ENCODE measurements at regions of chr13 and their contacts with region 1.

Region 1: DNA sequence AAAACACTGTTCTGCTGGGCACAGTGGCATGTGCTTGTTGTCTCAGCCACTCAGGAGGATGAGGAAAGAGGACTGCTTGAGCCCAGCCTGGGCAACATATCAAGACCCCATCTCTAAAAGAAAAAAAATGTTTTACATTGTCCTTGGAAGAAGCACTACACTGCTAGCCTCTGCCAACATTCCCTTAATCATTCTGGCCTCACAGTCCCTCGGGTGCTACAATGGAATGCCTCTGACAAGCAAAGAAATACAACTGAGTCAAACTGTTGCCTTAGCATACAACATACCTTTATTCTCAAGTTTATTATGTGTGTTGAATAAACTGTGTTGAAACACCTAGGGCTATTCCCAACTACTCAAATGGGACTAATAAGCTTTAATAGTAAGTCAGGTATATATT is 56.1 kb downstream of the PSPC1 start:
- DNase-seq: no peak
- H3K4me3 ChIP-seq: no peak overlapping the region
- CTCF ChIP-seq: no peak

Region 2: GRCh38 chr13:19681517-19681916 is 45.1 kb before region 1 on chr13:
- in situ Hi-C with region 1: no loop called
- DNase-seq: no peak
- H3K4me3 ChIP-seq: no peak overlapping the region
- CTCF ChIP-seq: no peak

Region 3: DNA sequence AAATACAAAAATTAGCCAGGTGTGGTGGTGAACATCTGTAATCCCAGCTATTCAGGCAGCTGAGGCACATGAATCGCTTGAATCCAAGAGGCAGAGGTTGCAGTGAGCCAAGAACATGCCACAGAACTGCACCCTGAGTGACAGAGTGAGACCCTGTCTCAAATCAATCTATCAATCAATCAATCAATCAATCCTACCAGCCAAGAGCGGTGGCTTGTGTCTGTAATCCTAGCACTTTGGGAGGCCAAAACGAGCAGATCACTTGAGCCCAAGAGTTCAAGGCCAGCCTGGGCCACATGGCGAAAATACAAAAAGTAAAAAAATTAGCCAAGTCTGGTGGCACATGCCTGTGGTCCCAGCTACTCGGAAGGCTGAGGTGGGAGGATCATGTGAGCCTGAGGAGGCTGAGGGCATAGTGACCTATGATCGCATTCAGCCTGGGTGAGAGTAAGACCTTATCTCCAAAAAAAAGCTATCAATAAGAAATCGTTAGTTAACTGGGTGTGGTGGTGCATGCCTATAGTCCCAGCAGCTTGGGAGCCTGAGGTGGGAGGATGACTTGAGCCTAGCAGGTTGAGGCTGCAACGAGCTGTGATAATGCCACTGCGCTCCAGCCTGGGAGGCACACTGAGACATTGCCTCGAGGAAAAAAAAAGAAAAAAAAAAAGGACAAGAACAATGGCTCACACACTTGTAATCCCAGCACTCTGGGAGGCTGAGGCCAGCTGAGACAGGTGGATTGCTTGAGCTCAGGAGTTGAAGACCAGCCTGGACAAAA is 39.8 kb after region 1 on chr13:
- in situ Hi-C with region 1: loop called (anchors 5 kb)
- DNase-seq: no peak
- H3K4me3 ChIP-seq: no peak overlapping the region
- CTCF ChIP-seq: no peak